ENCODE measurements at regions of chr5 and their contacts with region 1.

Region 1: DNA sequence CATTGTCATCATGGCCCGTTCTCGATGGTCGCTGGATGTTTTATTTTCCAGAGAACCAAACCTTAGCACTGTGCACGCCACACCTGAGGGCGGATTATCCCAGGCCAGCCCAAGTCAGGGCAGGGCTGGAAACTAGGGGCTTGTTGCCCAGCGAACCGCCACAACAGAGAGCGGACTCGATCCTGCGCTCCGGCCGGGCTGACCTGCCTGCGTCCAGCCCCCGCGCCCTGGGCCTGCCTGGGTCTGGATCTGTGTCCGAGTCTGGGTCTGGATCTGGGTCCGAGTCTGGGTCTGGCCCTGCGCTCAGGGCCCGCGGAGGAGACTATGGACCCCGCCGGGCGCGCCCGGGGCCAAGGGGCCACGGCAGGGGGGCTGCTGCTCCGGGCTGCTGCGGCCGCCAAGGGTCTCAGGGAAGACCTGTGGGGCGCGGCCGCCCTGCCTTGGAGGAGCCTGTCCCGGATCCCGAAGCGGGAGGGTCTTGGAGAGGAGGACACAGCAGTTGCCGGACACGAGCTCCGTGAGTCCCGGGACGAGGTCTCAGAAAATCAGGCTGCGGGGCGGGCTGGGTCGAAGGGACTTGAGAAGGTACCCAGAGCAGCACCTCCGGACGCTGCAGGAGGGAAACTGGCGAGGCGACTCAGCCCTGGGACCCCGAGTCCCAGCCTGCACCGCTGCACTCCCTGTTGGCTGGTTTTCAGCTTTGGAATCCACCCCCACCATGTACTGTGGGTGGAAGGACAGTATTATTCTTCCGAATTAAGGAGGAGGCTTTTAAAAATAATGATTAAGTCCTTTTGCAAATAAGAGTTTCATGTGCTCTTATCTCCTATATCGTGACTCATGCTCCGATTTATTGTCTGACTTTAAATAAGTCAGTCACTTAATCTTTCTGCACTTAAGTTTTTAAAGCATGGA is at the start of gene ANKDD1B:
- DNase-seq: peak; percentile 61 to 70
- H3K4me3 ChIP-seq: peak within 1 kb of the TSS; percentile 74
- H3K4me3 Mint-ChIP-seq: peak within 1 kb of the TSS; percentile 99
- H3K27ac Mint-ChIP-seq: peak within 1 kb of the TSS; percentile 87
- H3K4me1 ChIP-seq: peaks cover 55% of the 10 kb centered on the region
- H3K4me1 Mint-ChIP-seq: peaks cover 28% of the 10 kb centered on the region
- H3K27me3 ChIP-seq: no peaks in the 10 kb centered on the region
- H3K27me3 Mint-ChIP-seq: no peaks in the 10 kb centered on the region
- CTCF ChIP-seq: no peak
- total RNA-seq, gene ANKDD1B: 0.63 and 0.88 TPM in 2 replicates

Region 2: DNA sequence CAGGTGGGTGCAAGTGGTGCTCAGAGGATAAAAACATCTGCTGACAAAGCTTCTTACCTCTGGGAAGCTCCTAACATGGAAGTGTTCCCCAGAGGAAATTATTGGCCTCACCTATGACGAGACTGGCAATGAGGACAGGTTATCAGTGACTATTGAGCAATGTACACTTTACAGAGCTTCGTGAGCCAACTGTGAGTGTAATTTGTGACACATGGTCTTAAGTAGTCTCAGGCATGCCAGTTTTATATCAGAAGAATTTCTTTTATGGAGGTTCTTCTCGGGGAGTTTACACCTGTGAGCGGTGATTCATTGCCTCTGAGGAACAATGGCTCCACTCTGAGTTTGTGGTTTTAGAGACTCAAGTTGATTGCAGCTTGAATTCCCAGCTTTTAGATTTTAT is 11.0 kb after region 1 on chr5:
- CTCF ChIA-PET with region 1: interaction called, 4 read pairs
- POLR2A ChIA-PET with region 1: interaction called, 3 read pairs
- intact Hi-C with region 1: loop called (anchors 1 kb)
- DNase-seq: peak; percentile 59 to 77
- H3K4me3 ChIP-seq: no peak overlapping the region
- H3K4me3 Mint-ChIP-seq: no peak overlapping the region
- H3K27ac Mint-ChIP-seq: peak overlapping the region; percentile 61
- H3K4me1 ChIP-seq: peaks cover 71% of the 10 kb centered on the region
- H3K4me1 Mint-ChIP-seq: peaks cover 39% of the 10 kb centered on the region
- H3K27me3 ChIP-seq: no peaks in the 10 kb centered on the region
- H3K27me3 Mint-ChIP-seq: no peaks in the 10 kb centered on the region
- CTCF ChIP-seq: no peak

Region 3: GRCh38 chr5:75648712-75649111 is 37.1 kb after region 1 on chr5:
- CTCF ChIA-PET with region 1: no interaction called
- POLR2A ChIA-PET with region 1: no interaction called
- intact Hi-C with region 1: loop called (anchors 5 kb)
- DNase-seq: peak; percentile 76 to 85
- H3K4me3 ChIP-seq: no peak overlapping the region
- H3K4me3 Mint-ChIP-seq: peak overlapping the region; percentile 19
- H3K27ac Mint-ChIP-seq: peak overlapping the region; percentile 62
- H3K4me1 ChIP-seq: peaks cover 6% of the 10 kb centered on the region; the same call in 1 of the 2 replicates
- H3K4me1 Mint-ChIP-seq: peaks cover 9% of the 10 kb centered on the region
- H3K27me3 ChIP-seq: no peaks in the 10 kb centered on the region
- H3K27me3 Mint-ChIP-seq: no peaks in the 10 kb centered on the region
- CTCF ChIP-seq: no peak

Measured in Caco-2 (cell line).